Activated T-helper 1 cell treated with anti-CD3 and anti-CD28 coated beads, Interleukin-12 subunit alpha, Interleukin-12 subunit beta, Interleukin-2, Interleukin-4 antibody, amounts not matched to agents 30 ng/mL and 10 ng/mL and 1 ng/mL, durations not matched to agents 14 hours and 24 hours and 36 hours (primary cell): ENCODE measurements at regions of chr11 and their contacts with region 1.

Region 1: DNA sequence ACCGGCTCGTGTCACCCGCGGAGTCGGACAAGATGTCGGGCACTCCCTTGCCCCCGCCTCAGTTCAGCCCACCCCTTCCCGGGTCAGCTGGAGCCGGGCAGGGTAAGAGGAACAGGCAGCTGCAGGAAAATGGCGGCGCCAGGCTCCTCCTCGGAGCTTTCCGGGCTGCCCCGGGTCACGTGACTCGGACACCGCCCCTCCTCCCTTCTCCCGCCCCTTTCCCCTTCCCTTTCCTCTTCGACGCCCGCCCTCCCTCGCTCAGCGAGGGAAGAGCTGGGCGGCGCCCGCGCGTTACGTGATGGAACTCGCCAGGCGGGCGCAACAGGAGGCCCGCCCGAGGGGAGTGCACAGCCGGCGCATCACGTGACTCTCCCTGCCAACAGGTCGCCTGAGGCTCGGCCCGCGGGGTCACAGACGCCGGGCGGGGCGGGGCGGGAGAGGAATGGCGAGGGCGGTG is at the start of gene PICALM:
- DNase-seq: peak; percentile 97
- H3K4me3 Mint-ChIP-seq: peak within 1 kb of the TSS; percentile 92
- H3K27ac Mint-ChIP-seq: peak within 1 kb of the TSS; percentile 97
- H3K4me1 Mint-ChIP-seq: peaks cover 33% of the 10 kb centered on the region
- H3K27me3 Mint-ChIP-seq: no peaks in the 10 kb centered on the region
- total RNA-seq, gene PICALM: 174 and 177 TPM in 2 replicates

Region 2: DNA sequence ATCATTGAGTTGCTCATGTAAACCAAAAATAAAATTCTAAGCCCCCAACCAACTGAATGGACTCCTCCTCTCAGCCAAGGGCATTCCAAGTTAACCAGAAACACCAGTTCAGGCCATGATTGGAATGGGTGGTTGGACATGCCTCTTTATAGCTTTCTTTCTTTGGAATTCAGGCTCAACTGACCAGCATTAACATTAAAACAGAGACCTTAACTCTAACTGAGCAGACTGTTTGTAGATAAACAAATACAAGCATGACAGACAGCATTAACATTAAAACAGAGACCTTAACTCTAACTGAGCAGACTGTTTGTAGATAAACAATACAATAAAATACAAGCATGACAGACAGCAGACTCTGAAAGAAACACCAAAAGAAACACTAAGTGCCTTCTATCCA is 720.0 kb before region 1 on chr11:
- intact Hi-C with region 1: no loop called
- DNase-seq: no peak
- H3K4me3 Mint-ChIP-seq: no peak overlapping the region
- H3K27ac Mint-ChIP-seq: no peak overlapping the region
- H3K4me1 Mint-ChIP-seq: no peaks in the 10 kb centered on the region
- H3K27me3 Mint-ChIP-seq: no peaks in the 10 kb centered on the region

Region 3: GRCh38 chr11:85752890-85753581 is 315.9 kb before region 1 on chr11:
- intact Hi-C with region 1: loop called (anchors 2 kb)
- DNase-seq: peak; percentile 89
- H3K4me3 Mint-ChIP-seq: peak overlapping the region; percentile 73
- H3K27ac Mint-ChIP-seq: peak overlapping the region; percentile 98
- H3K4me1 Mint-ChIP-seq: peaks cover 99% of the 10 kb centered on the region
- H3K27me3 Mint-ChIP-seq: peaks cover 4% of the 10 kb centered on the region

Region 4: GRCh38 chr11:85854557-85855340 is 214.2 kb before region 1 on chr11:
- intact Hi-C with region 1: no loop called
- DNase-seq: peak; percentile 88
- H3K4me3 Mint-ChIP-seq: peak overlapping the region; percentile 84
- H3K27ac Mint-ChIP-seq: peak overlapping the region; percentile 83
- H3K4me1 Mint-ChIP-seq: peaks cover 18% of the 10 kb centered on the region
- H3K27me3 Mint-ChIP-seq: peaks cover 5% of the 10 kb centered on the region

Region 5: GRCh38 chr11:86056351-86056854 is 12.6 kb before region 1 on chr11:
- intact Hi-C with region 1: loop called (anchors 1 kb)
- DNase-seq: no peak
- H3K4me3 Mint-ChIP-seq: no peak overlapping the region
- H3K27ac Mint-ChIP-seq: peak overlapping the region; percentile 53
- H3K4me1 Mint-ChIP-seq: peaks cover 78% of the 10 kb centered on the region
- H3K27me3 Mint-ChIP-seq: no peaks in the 10 kb centered on the region

Region 6: GRCh38 chr11:86174101-86175046 is 105.4 kb after region 1 on chr11:
- intact Hi-C with region 1: loop called (anchors 1 kb)
- DNase-seq: no peak
- H3K4me3 Mint-ChIP-seq: no peak overlapping the region
- H3K27ac Mint-ChIP-seq: no peak overlapping the region
- H3K4me1 Mint-ChIP-seq: peaks cover 33% of the 10 kb centered on the region
- H3K27me3 Mint-ChIP-seq: no peaks in the 10 kb centered on the region

Region 7: DNA sequence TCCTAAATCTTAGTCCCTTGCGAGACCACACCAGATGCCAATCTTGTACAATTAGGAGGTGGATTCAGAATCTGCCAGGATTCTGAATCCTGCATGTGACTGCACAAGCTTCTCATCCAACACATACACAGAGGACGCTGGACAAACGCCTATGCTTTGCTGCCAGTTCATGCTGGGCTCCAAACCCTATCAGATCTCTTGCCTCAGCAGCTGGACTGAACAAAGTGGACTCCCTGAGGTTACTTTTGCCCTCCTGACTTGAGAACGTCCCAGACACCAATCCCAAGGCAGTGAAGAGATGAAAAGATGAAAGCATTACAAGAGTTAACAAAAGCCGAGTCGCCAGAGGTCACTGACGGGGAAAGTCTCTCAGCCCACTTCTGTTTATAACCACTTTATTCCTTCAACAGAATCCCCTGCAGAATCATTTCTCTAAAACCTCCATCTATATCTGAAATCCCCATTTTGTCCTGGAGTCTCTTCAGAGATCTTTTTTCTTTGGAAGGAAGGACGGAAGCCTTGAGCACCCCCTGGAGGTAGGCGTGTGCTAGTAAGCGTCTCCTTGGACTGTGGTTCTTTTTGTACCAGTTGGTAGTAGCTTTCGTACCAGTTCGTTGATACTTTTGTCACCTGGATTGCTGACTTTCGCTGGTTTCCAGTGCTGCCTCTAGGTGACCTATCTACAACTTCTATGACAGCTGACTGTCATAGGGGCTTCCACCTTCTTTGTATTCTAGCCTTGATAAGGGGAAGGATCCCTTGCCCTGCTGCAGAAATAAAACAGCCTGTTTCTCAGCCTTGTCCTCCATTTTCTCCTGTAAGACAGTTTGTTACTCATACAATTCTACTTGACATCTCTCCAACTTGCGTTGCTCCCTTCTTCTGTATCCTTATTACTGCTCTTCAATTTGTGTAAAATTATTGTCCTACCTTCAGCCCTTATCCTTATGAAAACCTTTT is 149.4 kb after region 1 on chr11:
- intact Hi-C with region 1: loop called (anchors 1 kb)
- DNase-seq: peak; percentile 42
- H3K4me3 Mint-ChIP-seq: peak overlapping the region; percentile 40
- H3K27ac Mint-ChIP-seq: peak overlapping the region; percentile 81
- H3K4me1 Mint-ChIP-seq: peaks cover 81% of the 10 kb centered on the region
- H3K27me3 Mint-ChIP-seq: no peaks in the 10 kb centered on the region